Left cardiac atrium (tissue), 4 donors: ENCODE measurements at regions of chr10 and their contacts with region 1.

Region 1: DNA sequence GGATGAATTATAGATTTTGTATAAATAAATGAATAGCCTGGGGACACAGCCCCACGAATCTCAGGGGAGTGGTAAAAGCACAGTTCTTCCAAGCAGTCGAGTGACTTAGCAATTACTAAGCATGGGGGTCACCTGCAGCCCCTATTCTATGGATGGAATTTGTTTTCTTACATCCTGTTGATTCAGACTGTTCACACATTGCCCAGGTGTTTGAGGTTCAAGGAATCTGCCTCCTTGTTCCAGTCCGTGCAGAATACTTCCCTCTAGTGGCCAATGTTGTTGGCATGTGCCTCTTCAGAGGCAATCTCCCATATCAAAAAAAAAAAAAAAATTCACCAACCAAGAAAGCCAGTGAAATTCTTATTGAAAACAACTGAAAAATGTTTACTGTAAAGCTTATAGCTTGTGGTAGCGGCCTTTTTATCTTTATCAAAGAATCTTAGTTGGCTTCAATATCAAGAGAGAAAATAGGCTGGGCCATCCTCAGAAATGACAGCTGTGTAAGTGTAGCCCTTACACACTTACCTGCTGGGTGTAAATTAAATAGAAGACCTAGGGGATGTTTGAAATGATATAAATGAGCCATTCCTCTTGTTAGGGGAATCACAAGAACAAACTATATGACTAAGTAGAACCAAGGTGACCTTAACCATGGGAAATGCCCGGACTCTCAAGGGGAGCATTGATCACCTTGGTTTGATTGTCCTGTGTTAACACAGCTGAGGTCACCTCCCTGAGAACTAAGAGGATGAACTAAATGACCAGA is 7.8 kb downstream of the LIPM start:
- DNase-seq: no peak
- ATAC-seq: peak in 1 of 2 donors; percentile 74

Region 2: GRCh38 chr10:88582806-88583583 is 227.4 kb before region 1 on chr10 and contains the start of gene RNLS:
- intact Hi-C with region 1: loop called in 1 of 2 experiments (anchors 10 kb)
- DNase-seq: peak; percentile 79
- ATAC-seq: peak; percentile 96 to 97
- total RNA-seq, gene RNLS: 10.0 to 13.6 TPM

Region 3: GRCh38 chr10:88687853-88688467 is 122.4 kb before region 1 on chr10:
- intact Hi-C with region 1: loop called in 1 of 2 experiments (anchors 5 kb)
- DNase-seq: no peak
- ATAC-seq: no peak